Activated CD4-positive, alpha-beta memory T cell treated with anti-CD3 and anti-CD28 coated beads, Interleukin-2, amount 10 ng/mL, durations not matched to agents 7 days and 5 days (primary cell): ENCODE measurements at regions of chr14 and their contacts with region 1.

Region 1: GRCh38 chr14:64400829-64401459 is 12.8 kb downstream of the MTHFD1 start:
- DNase-seq: no peak
- H3K4me3 Mint-ChIP-seq: no peak overlapping the region
- H3K27ac Mint-ChIP-seq: no peak overlapping the region
- H3K4me1 Mint-ChIP-seq: peaks cover 14% of the 10 kb centered on the region
- H3K27me3 Mint-ChIP-seq: no peaks in the 10 kb centered on the region

Region 2: DNA sequence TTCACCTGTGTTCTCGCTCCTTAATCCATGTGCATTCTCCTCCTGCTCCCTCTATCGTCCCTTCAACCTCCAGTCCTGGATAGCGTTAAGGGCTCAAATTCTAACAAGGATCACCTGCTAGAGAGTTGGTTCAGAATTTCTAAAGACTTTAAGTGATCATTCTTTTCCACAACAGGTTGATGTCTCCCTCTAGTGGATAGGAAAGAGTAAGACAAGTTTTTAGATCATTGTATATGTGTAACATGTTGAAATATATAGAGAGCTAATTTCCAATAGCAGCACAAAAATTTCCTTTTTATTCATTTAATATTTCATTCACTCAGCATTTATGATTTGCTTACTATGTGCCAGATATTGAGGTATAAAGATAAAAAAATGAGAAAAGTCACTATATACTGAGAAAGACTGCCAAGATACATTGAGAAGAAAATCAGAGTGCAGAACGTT is 97.5 kb before region 1 on chr14:
- CTCF ChIA-PET with region 1: no interaction called
- POLR2A ChIA-PET with region 1: no interaction called
- DNase-seq: no peak
- H3K4me3 Mint-ChIP-seq: no peak overlapping the region
- H3K27ac Mint-ChIP-seq: no peak overlapping the region
- H3K4me1 Mint-ChIP-seq: peaks cover 3% of the 10 kb centered on the region
- H3K27me3 Mint-ChIP-seq: peaks cover 2% of the 10 kb centered on the region

Region 3: GRCh38 chr14:64434528-64434927 is 33.6 kb after region 1 on chr14:
- CTCF ChIA-PET with region 1: interaction called, 17 read pairs
- POLR2A ChIA-PET with region 1: interaction called, 3 read pairs
- DNase-seq: no peak
- H3K4me3 Mint-ChIP-seq: no peak overlapping the region
- H3K27ac Mint-ChIP-seq: no peak overlapping the region
- H3K4me1 Mint-ChIP-seq: peaks cover 18% of the 10 kb centered on the region
- H3K27me3 Mint-ChIP-seq: no peaks in the 10 kb centered on the region